ENCODE measurements at regions of chr4 and their contacts with region 1.

Region 1: DNA sequence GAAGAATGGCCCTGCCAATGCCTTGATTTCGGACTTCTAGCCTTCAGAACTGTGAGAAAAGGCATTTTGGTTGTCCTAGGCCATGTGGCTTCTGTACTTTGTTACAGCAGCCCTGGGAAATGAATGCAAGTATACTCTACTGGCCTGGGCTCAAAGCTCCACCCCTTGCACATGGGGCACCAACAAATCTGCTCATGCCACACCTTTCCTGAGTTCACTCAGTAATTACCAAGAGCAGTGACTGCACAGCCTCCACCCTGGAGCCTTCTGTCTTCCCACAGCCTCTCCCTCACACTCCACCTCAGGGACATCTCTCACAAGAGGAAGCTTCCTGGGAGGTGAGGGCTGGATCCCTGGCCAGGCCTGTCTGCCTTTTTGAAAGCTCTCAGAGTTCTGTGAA is 29.1 kb upstream of the GAB1 start:
- DNase-seq: no peak

Region 2: GRCh38 chr4:141497627-141498026 is 1809.9 kb before region 1 on chr4:
- intact Hi-C with region 1: no loop called
- DNase-seq: no peak

Region 3: GRCh38 chr4:143281507-143282190 is 25.9 kb before region 1 on chr4:
- intact Hi-C with region 1: loop called in 1 of 2 experiments (anchors 1 kb)
- DNase-seq: no peak

Region 4: GRCh38 chr4:143358923-143359643 is 51.6 kb after region 1 on chr4:
- intact Hi-C with region 1: no loop called
- DNase-seq: no peak

Measured in posterior vena cava (tissue), 2 donors.